Ascending aorta (tissue), 2 donors: ENCODE measurements at regions of chr5 and their contacts with region 1.

Region 1: GRCh38 chr5:158695595-158696330 is 404.0 kb downstream of the EBF1 start:
- DNase-seq: peak in 1 of 2 donors; percentile 87
- H3K4me3 ChIP-seq: no peak overlapping the region
- H3K27ac ChIP-seq: peak overlapping the region; percentile 15 to 24
- H3K4me1 ChIP-seq: peaks cover under 1 to 48% of the 10 kb centered on the region in 2 donors
- H3K27me3 ChIP-seq: no peaks in the 10 kb centered on the region
- CTCF ChIP-seq: peak; percentile 94 to 98 (median 96)

Region 2: DNA sequence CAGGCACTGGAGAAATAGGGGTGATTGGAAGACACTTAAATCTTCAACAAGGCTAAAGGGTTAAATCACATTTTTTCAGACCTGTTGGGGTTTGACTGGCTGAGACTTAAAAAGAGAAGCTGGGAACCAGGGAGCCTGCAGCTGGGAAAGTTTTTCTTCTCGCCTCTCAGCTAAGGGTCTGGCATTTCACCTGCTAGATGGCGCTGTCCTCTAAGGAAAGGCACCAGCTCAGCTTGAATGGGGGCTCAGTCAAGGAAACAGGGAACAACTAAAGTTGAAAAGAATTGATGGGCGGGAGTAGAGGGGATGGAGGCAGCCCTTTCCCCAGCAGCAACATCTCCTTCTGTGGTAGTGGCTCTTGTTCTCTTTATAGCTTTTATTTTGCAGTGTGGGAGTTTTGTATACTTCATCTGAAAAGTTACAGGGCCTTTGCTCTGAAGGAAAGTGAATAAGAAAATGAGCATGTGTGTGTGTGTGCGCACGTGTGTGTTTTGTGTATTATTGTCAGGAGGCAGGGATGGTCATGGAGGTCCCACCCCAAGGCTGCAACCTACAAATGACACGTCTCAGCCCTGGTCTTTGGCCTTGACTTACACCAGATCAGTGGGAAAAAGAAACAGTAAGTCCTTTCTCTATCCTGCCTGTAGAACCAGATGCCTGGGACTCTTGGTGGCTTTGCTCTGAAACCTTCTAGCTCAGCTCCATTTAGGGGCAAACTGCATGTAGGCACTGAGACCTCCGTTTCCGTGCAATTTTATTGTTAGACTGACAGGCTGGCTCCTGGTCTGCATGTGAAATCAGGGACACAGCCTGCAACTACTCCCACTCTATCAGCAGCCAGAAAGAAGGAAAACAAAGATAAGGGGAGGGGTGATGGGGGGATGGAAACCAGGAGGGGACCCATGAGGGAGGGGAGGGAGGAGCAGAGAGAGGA is 520.6 kb before region 1 on chr5:
- intact Hi-C with region 1: loop called (anchors 2 kb)
- DNase-seq: peak in 1 of 2 donors; percentile 80
- H3K4me3 ChIP-seq: no peak overlapping the region
- H3K27ac ChIP-seq: no peak overlapping the region
- H3K4me1 ChIP-seq: peaks cover 0 to 11% of the 10 kb centered on the region in 2 donors
- H3K27me3 ChIP-seq: no peaks in the 10 kb centered on the region
- CTCF ChIP-seq: peak; percentile 74 to 85 (median 77)

Region 3: GRCh38 chr5:158802941-158803341 is 107.2 kb after region 1 on chr5:
- intact Hi-C with region 1: loop called (anchors 2 kb)
- DNase-seq: no peak
- H3K4me3 ChIP-seq: peak overlapping the region in 1 of 2 donors; percentile 36
- H3K27ac ChIP-seq: peak overlapping the region; percentile 43 to 69
- H3K4me1 ChIP-seq: peaks cover 3 to 51% of the 10 kb centered on the region in 2 donors
- H3K27me3 ChIP-seq: no peaks in the 10 kb centered on the region
- CTCF ChIP-seq: no peak

Region 4: GRCh38 chr5:158819840-158820620 is 124.3 kb after region 1 on chr5:
- intact Hi-C with region 1: no loop called
- DNase-seq: no peak
- H3K4me3 ChIP-seq: no peak overlapping the region
- H3K27ac ChIP-seq: no peak overlapping the region
- H3K4me1 ChIP-seq: peaks cover 0 to 4% of the 10 kb centered on the region in 2 donors
- H3K27me3 ChIP-seq: no peaks in the 10 kb centered on the region
- CTCF ChIP-seq: no peak

Region 5: DNA sequence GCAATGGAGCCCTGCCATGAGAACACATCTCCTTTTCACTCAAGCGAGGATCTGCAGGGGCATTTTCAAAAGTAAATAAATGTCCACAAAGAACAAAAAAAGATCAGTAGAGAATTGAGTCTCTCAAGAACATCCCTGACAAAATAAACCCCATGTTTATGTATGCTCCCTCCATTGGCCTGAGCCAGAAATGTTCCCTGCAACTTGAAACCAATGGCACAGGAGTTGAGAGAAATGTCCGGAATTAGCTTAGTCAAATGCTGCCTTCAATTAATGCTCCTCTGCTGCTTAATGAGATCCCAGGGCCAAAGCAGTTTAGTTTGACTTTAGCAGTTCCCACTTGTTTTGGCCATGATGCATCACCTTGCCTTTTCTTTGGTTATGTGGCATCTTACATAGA is 165.6 kb after region 1 on chr5:
- intact Hi-C with region 1: no loop called
- DNase-seq: no peak
- H3K4me3 ChIP-seq: no peak overlapping the region
- H3K27ac ChIP-seq: no peak overlapping the region
- H3K4me1 ChIP-seq: peaks cover 2 to 21% of the 10 kb centered on the region in 2 donors
- H3K27me3 ChIP-seq: no peaks in the 10 kb centered on the region
- CTCF ChIP-seq: no peak

Region 6: GRCh38 chr5:158875272-158875679 is 179.5 kb after region 1 on chr5:
- intact Hi-C with region 1: loop called (anchors 10 kb)
- DNase-seq: no peak
- H3K4me3 ChIP-seq: peak overlapping the region; percentile 37 to 54
- H3K27ac ChIP-seq: peak overlapping the region; percentile 55 to 71
- H3K4me1 ChIP-seq: peaks cover 3 to 47% of the 10 kb centered on the region in 2 donors
- H3K27me3 ChIP-seq: no peaks in the 10 kb centered on the region
- CTCF ChIP-seq: no peak

Region 7: GRCh38 chr5:159049844-159050315 is 354.1 kb after region 1 on chr5:
- intact Hi-C with region 1: loop called (anchors 5 kb)
- DNase-seq: no peak
- H3K4me3 ChIP-seq: peak overlapping the region; percentile 43 to 64
- H3K27ac ChIP-seq: peak overlapping the region; percentile 80 to 87
- H3K4me1 ChIP-seq: peaks cover 4 to 52% of the 10 kb centered on the region in 2 donors
- H3K27me3 ChIP-seq: no peaks in the 10 kb centered on the region
- CTCF ChIP-seq: peak; percentile 35 to 63 (median 44)

Region 8: DNA sequence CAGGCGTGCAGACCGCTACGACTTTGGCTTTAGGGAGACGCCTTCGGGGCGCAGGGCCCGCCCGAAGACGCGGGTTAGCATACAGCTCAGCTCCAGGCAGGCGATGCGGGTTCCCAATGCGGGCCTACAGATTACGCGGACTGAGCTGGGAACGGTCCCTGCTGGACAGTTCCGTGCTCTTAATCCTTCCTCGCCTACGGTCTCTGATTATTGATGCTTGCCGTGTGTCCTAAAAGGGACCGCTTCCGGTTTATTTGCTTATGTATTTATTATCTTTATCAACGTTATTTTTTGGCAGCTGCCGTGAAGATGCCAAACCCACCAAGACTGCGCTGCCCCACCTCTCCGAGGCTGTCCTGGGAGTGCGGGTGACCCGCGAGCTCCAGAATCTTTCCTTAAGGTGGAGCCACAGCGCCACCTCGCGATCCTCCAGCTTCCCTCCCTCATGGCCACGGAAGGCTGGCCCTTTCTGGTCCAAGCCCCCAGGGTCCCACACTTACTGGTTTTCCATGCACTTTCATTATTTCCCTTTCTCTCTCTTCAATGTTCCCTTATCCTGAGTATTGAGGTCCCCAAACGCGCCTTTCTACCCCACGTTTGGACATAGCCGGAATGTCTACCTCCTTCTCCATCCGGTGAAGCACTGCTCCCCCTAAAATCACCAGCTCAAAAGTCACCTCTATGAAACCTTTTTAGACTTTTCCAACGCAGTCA is 411.0 kb after region 1 on chr5:
- intact Hi-C with region 1: loop called (anchors 1 kb)
- DNase-seq: peak in 1 of 2 donors; percentile 88
- H3K4me3 ChIP-seq: peak overlapping the region; percentile 46 to 61
- H3K27ac ChIP-seq: peak overlapping the region in 1 of 2 donors; percentile 50
- H3K4me1 ChIP-seq: peaks cover 5 to 8% of the 10 kb centered on the region in 2 donors
- H3K27me3 ChIP-seq: no peaks in the 10 kb centered on the region
- CTCF ChIP-seq: peak; percentile 83 to 91 (median 89)

Region 9: DNA sequence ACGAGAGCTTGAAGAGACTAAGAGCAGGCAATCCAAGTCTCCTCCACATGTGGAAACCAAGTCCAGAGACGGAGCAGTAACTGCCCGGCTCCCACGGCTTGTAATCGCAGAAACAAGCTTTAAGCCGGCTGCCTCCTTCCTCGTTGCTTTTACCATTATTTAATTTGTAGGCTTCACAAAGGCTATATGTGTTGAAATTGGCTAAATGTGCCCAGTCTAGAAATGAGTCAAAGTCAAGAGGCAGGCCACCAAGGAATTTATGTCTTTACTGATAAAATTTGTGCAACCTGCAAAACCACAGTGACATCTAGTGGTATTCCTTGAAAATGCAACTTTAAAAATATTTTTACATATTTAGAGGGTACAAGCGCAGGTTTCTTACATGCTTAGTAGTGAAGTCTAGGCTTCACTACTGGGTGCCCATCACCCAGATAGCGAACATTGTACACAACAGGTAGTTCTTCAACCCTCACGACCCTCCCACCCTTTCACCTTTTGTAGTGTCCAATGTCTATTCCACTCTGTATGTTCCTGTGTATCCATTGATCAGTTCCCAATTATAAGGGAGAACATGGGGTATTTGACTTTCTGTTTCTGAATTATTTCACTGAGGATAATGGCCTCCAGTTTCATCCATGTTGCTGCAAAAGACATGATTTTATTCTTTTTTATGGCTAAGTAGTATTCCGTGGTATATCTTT is 437.4 kb after region 1 on chr5:
- intact Hi-C with region 1: loop called (anchors 1 kb)
- DNase-seq: peak in 1 of 2 donors; percentile 74
- H3K4me3 ChIP-seq: peak overlapping the region; percentile 29 to 34
- H3K27ac ChIP-seq: peak overlapping the region; percentile 65 to 80
- H3K4me1 ChIP-seq: no peaks in the 10 kb centered on the region
- H3K27me3 ChIP-seq: no peaks in the 10 kb centered on the region
- CTCF ChIP-seq: peak; percentile 66 to 90 (median 72)